Psoas muscle (tissue), 8 donors: ENCODE measurements at regions of chr13 and their contacts with region 1.

Region 1: DNA sequence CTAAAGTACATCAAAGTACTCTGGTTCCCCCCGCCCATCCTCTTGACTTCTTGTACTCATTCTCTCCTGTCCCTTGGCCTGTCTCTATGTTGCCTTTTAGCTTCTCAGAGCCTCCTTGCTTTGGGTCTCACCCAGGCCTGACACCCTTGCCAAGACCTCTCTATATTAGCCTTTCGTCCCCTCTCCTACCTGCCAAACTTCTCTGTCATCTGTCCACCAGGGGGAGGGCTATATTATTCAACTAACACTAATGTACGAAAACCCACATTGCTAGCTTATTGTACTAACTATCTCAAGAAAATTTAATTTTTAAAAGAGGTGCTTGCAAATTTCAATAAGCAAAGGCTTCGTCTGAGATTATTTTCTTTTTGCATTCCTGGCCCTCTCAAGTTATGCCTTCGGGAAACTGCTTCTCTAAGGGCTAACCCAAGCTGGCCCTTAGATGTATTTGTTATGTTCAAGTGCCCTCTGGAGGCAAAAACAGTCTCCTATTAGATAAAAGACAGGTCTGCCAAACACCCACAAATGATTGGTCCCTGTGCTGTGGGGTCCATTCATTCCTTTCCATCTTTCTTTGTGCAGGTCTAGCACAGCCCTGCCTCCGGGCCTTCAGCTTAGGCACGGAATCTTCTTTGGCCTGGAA is 6.3 kb upstream of the MRPS31 start:
- DNase-seq: no peak
- ATAC-seq: peak; percentile 83 to 97 (median 88)
- H3K4me3 ChIP-seq: peak overlapping the region; percentile 57
- H3K27ac ChIP-seq: no peak overlapping the region
- H3K4me1 ChIP-seq: no peaks in the 10 kb centered on the region
- H3K27me3 ChIP-seq: no peaks in the 10 kb centered on the region
- CTCF ChIP-seq: peak; percentile 69

Region 2: GRCh38 chr13:39942552-39943273 is 834.6 kb before region 1 on chr13:
- intact Hi-C with region 1: loop called in 1 of 2 experiments (anchors 5 kb)
- DNase-seq: peak; percentile 58 to 73
- ATAC-seq: peak; percentile 80 to 99 (median 96)
- H3K4me3 ChIP-seq: no peak overlapping the region
- H3K27ac ChIP-seq: no peak overlapping the region
- H3K4me1 ChIP-seq: no peaks in the 10 kb centered on the region
- H3K27me3 ChIP-seq: no peaks in the 10 kb centered on the region
- CTCF ChIP-seq: peak; percentile 86

Region 3: DNA sequence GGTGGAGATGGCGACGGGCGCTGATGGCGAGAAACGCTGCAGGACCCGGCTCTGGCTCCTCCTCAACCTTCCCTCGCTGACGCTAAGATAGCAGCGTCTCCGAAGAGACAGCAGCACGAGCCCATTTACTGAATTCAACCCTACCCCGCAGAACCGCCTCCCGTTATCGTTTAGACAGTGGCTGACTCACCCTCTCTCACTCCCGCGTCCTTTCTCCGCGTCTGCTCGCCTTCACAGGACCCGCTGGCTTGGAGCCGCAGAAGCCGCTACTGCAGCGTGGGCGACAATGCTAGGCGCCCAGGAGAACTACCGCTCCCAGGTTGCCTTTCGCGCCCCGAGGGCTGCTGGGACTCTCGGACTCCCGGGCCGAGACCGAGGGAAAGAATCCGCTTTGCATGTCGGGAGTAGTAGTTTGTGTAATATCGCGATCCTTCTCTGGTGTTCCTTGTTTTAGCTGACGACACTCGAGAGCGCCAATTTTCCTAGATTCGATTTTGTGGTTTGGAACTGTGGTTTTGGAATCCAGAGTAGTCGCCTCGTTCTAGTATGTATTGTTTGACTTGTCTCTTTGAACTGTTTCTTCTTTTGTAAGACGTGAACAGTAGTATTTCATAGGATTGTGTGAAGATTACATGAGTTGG is 355.3 kb after region 1 on chr13 and contains the start of gene KBTBD6:
- intact Hi-C with region 1: no loop called
- DNase-seq: peak; percentile 98
- ATAC-seq: peak; percentile 98 to 99 (median 98)
- H3K4me3 ChIP-seq: peak within 1 kb of the TSS; percentile 85
- H3K27ac ChIP-seq: peak within 1 kb of the TSS; percentile 90
- H3K4me1 ChIP-seq: peaks cover 30% of the 10 kb centered on the region
- H3K27me3 ChIP-seq: no peaks in the 10 kb centered on the region
- CTCF ChIP-seq: no peak
- total RNA-seq, gene KBTBD6: 2.4 to 6.0 (median 5.6) TPM